Panc1 (cell line): ENCODE measurements at regions of chr1 and their contacts with region 1.

Region 1: DNA sequence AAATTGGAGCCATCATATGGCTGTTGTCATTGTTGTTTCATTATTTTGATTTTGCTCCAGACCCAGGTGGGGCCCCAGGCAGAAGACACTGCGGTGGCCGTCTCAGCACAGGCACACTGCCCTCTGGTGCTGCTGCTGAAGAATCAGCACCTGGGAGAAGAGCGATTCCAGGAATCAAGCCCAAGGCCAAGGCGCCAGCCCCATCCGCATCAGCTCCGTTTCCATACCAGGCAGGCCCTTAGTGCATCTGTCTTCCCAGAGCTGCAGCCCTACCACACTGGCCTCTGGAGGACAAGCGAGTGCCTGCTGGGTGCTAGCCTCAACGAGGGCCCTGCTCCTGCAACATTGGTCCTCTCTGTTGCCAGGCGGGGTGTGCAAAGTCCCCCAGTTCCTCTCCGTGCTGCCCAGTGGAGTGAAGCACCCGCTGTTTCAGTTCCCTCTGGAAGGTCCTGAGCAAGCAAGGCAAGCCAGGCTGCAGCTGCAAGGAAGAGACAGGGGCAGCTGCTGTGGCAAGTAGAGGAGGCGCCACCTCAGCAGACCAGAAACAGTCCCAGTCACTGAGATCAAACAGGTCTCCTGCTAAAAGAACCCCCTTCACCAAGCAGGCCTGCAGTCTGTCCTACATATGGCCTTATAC is 5.2 kb downstream of the GRIK3 start:
- DNase-seq: no peak
- ATAC-seq: no peak
- H3K4me3 ChIP-seq: no peak overlapping the region
- H3K27ac ChIP-seq: no peak overlapping the region
- H3K4me1 ChIP-seq: no peaks in the 10 kb centered on the region
- H3K27me3 ChIP-seq: peaks cover 8% of the 10 kb centered on the region; the same call in 1 of the 2 replicates
- CTCF ChIP-seq: no peak; the same call in 1 of the 2 replicates

Region 2: GRCh38 chr1:36703526-36704208 is 325.4 kb before region 1 on chr1:
- CTCF ChIA-PET with region 1: no interaction called
- POLR2A ChIA-PET with region 1: no interaction called
- in situ Hi-C with region 1: no loop called
- intact Hi-C with region 1: loop called (anchors 5 kb)
- DNase-seq: peak; percentile 53
- ATAC-seq: peak; percentile 93
- H3K4me3 ChIP-seq: no peak overlapping the region
- H3K27ac ChIP-seq: no peak overlapping the region
- H3K4me1 ChIP-seq: peaks cover 5% of the 10 kb centered on the region; the same call in 1 of the 2 replicates
- H3K27me3 ChIP-seq: peaks cover 17% of the 10 kb centered on the region; the same call in 1 of the 2 replicates
- CTCF ChIP-seq: peak; percentile 97

Region 3: GRCh38 chr1:37479255-37480124 is 450.4 kb after region 1 on chr1:
- CTCF ChIA-PET with region 1: no interaction called
- POLR2A ChIA-PET with region 1: no interaction called
- in situ Hi-C with region 1: no loop called
- intact Hi-C with region 1: no loop called
- DNase-seq: no peak
- ATAC-seq: peak; percentile 22
- H3K4me3 ChIP-seq: peak overlapping the region; percentile 24 to 78
- H3K27ac ChIP-seq: peak overlapping the region; percentile 52
- H3K4me1 ChIP-seq: peaks cover 46% of the 10 kb centered on the region
- H3K27me3 ChIP-seq: no peaks in the 10 kb centered on the region
- CTCF ChIP-seq: no peak